Aorta (tissue), 5 donors: ENCODE measurements at regions of chr1 and their contacts with region 1.

Region 1: DNA sequence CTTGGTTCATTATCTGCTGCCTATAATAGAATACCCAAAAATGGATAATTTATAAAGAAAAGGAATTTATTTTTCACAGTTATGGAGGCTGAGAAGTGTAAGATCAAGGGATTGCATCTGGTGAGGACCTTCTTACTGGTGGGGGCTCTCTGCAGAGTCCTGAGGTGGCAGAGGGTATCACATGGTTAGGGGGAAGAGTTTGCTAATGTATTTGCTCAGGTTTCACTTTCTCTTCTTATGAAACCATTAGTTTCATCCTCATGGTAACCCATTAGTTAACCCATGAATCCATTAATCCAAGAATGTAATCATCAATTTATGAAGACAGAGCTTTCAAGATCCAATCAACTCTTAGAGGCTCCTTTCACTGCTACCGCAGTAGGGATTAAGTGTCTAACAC is 120.6 kb downstream of the DNM3 start:
- DNase-seq: no peak
- ATAC-seq: no peak
- H3K4me3 ChIP-seq: no peak overlapping the region
- H3K27ac ChIP-seq: no peak overlapping the region
- H3K4me1 ChIP-seq: no peaks in the 10 kb centered on the region
- H3K27me3 ChIP-seq: no peaks in the 10 kb centered on the region

Region 2: DNA sequence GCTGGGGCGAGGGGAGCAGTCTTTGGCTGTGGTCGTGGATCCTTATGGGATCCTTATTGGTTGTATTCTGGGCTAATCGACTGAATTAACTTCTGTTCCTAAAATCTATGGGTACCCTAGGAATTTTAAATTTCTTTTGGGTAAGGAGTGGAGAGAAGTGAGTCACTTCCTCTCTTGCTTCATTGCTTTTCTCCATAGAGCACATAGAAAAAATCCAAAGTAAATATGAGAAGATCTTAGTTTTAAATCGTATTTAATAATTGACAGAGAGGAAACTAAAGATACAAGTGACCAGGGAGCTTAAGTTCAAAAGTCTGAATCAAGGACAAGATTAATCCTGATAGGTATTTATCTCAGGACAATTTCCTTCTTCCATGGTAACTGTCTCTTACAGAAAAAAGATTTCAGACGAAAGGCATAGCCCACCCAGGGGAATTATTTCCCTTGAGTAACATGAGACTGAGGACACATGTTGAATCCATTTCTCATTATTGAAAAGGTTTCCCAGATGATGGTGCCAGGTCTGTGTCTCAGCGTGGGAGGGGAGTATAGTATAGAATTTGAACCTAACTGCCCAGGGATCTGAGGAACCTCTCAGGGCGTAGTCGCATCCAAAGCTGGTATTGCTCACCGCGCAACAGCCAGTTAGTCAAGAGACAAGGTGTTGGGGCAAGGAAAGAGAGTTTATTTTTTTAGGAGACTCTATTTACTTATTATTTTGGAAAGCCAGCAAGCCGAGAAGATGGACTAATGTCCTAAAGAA is 668.4 kb after region 1 on chr1:
- intact Hi-C with region 1: loop called in 1 of 2 experiments (anchors 5 kb)
- DNase-seq: no peak
- ATAC-seq: no peak
- H3K4me3 ChIP-seq: no peak overlapping the region
- H3K27ac ChIP-seq: no peak overlapping the region
- H3K4me1 ChIP-seq: no peaks in the 10 kb centered on the region
- H3K27me3 ChIP-seq: no peaks in the 10 kb centered on the region